Activated CD4-positive, alpha-beta T cell treated with anti-CD3 and anti-CD28 coated beads, Interleukin-2, amount 10 ng/mL, durations not matched to agents 7 days and 5 days (primary cell): ENCODE measurements at regions of chr13 and their contacts with region 1.

Region 1: GRCh38 chr13:32586080-32586900 is at the start of gene PDS5B:
- DNase-seq: peak; percentile 95
- H3K4me3 Mint-ChIP-seq: peak within 1 kb of the TSS; percentile 95
- H3K27ac Mint-ChIP-seq: peak within 1 kb of the TSS; percentile 95
- H3K4me1 Mint-ChIP-seq: peaks cover 34% of the 10 kb centered on the region
- H3K27me3 Mint-ChIP-seq: peaks cover 12% of the 10 kb centered on the region
- total RNA-seq, gene PDS5B: 77.6 to 92.3 TPM

Region 2: DNA sequence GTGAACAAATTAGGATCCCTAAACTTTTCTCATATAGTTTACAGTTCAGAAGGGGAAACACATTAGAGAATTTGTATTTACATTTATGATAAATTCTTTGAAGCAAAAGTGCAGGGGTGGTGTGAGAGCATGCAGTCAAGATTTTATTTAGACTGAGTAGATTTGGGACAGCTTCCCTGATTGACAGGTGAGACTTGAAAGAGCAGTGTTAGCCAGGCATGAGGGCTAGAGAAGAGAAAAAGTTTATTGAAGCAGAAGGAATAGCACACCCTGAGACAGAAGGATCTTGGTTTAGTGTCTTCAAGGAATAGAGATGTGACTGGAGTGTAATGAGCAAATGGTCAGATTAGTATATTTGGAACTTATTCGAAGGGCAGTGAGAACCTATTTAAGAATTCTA is 50.4 kb after region 1 on chr13:
- CTCF ChIA-PET with region 1: interaction called, 13 read pairs
- POLR2A ChIA-PET with region 1: interaction called, 3 read pairs
- DNase-seq: no peak
- H3K4me3 Mint-ChIP-seq: no peak overlapping the region
- H3K27ac Mint-ChIP-seq: no peak overlapping the region
- H3K4me1 Mint-ChIP-seq: peaks cover 22% of the 10 kb centered on the region
- H3K27me3 Mint-ChIP-seq: no peaks in the 10 kb centered on the region

Region 3: GRCh38 chr13:32642316-32642715 is 56.0 kb after region 1 on chr13:
- CTCF ChIA-PET with region 1: interaction called, 13 read pairs
- POLR2A ChIA-PET with region 1: interaction called, 6 read pairs
- DNase-seq: no peak
- H3K4me3 Mint-ChIP-seq: no peak overlapping the region
- H3K27ac Mint-ChIP-seq: no peak overlapping the region
- H3K4me1 Mint-ChIP-seq: peaks cover 55% of the 10 kb centered on the region
- H3K27me3 Mint-ChIP-seq: no peaks in the 10 kb centered on the region

Region 4: DNA sequence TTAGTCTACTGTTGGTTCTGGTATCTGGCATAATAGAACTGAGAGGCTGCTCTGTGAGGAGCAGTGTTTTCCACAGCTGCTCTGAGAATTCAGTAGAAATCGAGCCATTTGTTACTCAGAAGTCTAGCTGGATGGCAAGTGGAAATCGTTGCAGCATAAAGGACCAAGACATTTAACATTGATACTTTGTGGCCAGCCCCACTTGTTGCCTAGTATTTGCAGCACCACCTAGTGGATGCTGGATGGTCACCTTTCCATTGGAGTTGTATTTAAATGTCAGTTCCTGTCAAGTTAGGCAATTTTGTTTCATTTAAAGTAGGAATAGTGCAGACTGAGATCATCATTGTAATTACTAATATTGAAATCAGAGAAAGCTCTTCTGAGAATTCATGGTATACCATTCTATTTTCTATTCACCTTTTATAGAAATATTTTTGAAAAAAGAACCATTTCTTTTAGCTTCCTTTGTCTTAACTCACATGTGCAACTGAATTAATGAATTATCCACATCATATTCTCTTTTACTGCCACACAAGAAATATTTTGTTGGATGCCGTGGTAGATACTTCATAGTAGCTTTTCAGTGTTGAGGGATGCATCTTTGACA is 64.5 kb after region 1 on chr13:
- CTCF ChIA-PET with region 1: interaction called, 15 read pairs
- POLR2A ChIA-PET with region 1: interaction called, 6 read pairs
- DNase-seq: peak; percentile 64
- H3K4me3 Mint-ChIP-seq: no peak overlapping the region
- H3K27ac Mint-ChIP-seq: no peak overlapping the region
- H3K4me1 Mint-ChIP-seq: peaks cover 33% of the 10 kb centered on the region
- H3K27me3 Mint-ChIP-seq: no peaks in the 10 kb centered on the region

Region 5: DNA sequence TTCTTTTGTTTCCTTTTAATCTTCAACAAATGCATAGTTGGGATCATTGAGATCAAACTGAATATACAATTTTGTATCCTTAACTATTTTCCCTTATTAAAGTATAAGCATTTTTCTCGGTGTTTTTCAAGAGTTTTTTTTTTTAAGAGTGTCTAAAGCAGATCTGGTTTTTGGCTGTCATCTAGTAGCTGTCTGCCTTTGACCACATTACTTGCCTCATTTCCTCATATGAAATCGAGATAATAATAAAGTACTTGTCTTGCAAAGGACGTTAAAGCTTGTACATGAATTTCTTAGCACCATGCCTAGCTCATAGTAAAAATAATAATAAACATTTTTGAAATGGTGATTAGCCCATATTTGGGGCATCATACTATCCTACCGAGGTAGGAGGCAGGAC is 121.2 kb after region 1 on chr13:
- CTCF ChIA-PET with region 1: no interaction called
- POLR2A ChIA-PET with region 1: no interaction called
- DNase-seq: no peak
- H3K4me3 Mint-ChIP-seq: no peak overlapping the region
- H3K27ac Mint-ChIP-seq: no peak overlapping the region
- H3K4me1 Mint-ChIP-seq: peaks cover 11% of the 10 kb centered on the region
- H3K27me3 Mint-ChIP-seq: no peaks in the 10 kb centered on the region

Region 6: GRCh38 chr13:33678906-33679657 is 1092.8 kb after region 1 on chr13:
- CTCF ChIA-PET with region 1: no interaction called
- POLR2A ChIA-PET with region 1: no interaction called
- DNase-seq: peak; percentile 45
- H3K4me3 Mint-ChIP-seq: peak overlapping the region; percentile 18
- H3K27ac Mint-ChIP-seq: peak overlapping the region; percentile 84
- H3K4me1 Mint-ChIP-seq: peaks cover 24% of the 10 kb centered on the region
- H3K27me3 Mint-ChIP-seq: no peaks in the 10 kb centered on the region